Mucosa of descending colon (tissue), 3 donors: ENCODE measurements at regions of chr16 and their contacts with region 1.

Region 1: GRCh38 chr16:22188595-22189442 is 17.3 kb upstream of the EEF2K start:
- DNase-seq: peak; percentile 69 to 83 (median 75)
- ATAC-seq: peak; percentile 30
- H3K4me3 ChIP-seq: no peak overlapping the region
- H3K4me1 ChIP-seq: peaks cover 26% of the 10 kb centered on the region
- CTCF ChIP-seq: peak; percentile 82

Region 2: GRCh38 chr16:22007509-22008214 is 181.2 kb before region 1 on chr16 and contains the start of gene MOSMO:
- intact Hi-C with region 1: loop called (anchors 10 kb)
- DNase-seq: peak; percentile 75 to 87 (median 80)
- ATAC-seq: peak; percentile 95
- H3K4me3 ChIP-seq: peak within 1 kb of the TSS; percentile 84
- H3K4me1 ChIP-seq: peaks cover 10% of the 10 kb centered on the region
- CTCF ChIP-seq: no peak
- total RNA-seq, gene MOSMO: 8.6 to 11.4 (median 11.4) TPM

Region 3: GRCh38 chr16:22014271-22014873 is 174.4 kb before region 1 on chr16:
- intact Hi-C with region 1: loop called (anchors 10 kb)
- DNase-seq: no peak
- ATAC-seq: no peak
- H3K4me3 ChIP-seq: no peak overlapping the region
- H3K4me1 ChIP-seq: peaks cover 2% of the 10 kb centered on the region
- CTCF ChIP-seq: no peak

Region 4: DNA sequence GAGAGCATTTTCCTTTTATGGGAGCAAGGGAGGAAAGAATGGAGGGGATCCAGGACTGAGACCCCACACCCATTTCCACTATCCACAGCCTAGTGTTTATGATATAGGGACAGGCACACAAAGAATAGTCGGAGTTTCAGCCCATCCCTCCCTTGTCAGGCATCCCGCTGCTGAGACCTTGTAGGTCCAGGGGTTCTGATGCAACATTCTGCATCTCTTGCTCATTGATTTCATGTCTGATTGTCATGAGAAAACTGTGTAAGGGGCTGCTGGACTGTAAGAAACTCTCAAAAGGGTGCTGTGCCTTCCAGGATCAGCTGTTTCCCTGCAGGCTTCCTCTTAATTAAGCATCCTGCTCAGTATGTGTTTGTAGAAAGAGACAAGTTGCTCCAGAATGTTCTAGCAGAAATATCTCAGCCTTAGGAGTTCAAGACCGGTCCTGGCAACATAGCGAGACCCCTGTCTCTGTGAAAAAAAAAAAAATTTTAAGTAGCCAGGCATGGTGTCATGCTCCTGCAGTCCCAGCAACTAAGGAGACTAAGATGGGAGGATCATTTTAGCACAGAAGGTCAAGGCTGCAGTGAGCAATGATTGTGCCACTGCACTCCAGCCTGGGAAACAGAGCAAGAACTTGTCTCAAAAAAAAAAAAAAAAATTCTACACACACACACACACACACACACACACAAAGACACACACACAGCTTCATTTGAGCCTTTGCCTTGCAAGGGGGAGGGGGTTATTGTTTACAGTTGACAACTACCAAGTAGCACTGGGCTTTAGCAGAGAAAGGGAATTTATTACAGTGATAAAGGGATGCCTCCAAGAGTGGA is 103.3 kb after region 1 on chr16:
- intact Hi-C with region 1: no loop called
- DNase-seq: no peak
- ATAC-seq: no peak
- H3K4me3 ChIP-seq: no peak overlapping the region
- H3K4me1 ChIP-seq: no peaks in the 10 kb centered on the region
- CTCF ChIP-seq: no peak